BJ (cell line): ENCODE measurements at regions of chr10 and their contacts with region 1.

Region 1: GRCh38 chr10:88598055-88598454 is 11.5 kb downstream of the LIPJ start:
- DNase-seq: no peak
- H3K4me3 ChIP-seq: no peak overlapping the region
- H3K27me3 ChIP-seq: no peaks in the 10 kb centered on the region
- CTCF ChIP-seq: no peak

Region 2: GRCh38 chr10:88582806-88583583 is 15.1 kb before region 1 on chr10 and contains the start of gene RNLS:
- CTCF ChIA-PET with region 1: interaction called, 12 read pairs
- POLR2A ChIA-PET with region 1: interaction called, 3 read pairs
- DNase-seq: no peak
- H3K4me3 ChIP-seq: peak within 1 kb of the TSS; percentile 42
- H3K27me3 ChIP-seq: no peaks in the 10 kb centered on the region
- CTCF ChIP-seq: peak; percentile 94
- polyA plus RNA-seq, gene RNLS: 11.8 and 14.6 TPM in 2 replicates

Region 3: GRCh38 chr10:88616251-88616977 is 18.4 kb after region 1 on chr10:
- CTCF ChIA-PET with region 1: no interaction called
- POLR2A ChIA-PET with region 1: no interaction called
- DNase-seq: no peak
- H3K4me3 ChIP-seq: no peak overlapping the region
- H3K27me3 ChIP-seq: no peaks in the 10 kb centered on the region
- CTCF ChIP-seq: no peak

Region 4: DNA sequence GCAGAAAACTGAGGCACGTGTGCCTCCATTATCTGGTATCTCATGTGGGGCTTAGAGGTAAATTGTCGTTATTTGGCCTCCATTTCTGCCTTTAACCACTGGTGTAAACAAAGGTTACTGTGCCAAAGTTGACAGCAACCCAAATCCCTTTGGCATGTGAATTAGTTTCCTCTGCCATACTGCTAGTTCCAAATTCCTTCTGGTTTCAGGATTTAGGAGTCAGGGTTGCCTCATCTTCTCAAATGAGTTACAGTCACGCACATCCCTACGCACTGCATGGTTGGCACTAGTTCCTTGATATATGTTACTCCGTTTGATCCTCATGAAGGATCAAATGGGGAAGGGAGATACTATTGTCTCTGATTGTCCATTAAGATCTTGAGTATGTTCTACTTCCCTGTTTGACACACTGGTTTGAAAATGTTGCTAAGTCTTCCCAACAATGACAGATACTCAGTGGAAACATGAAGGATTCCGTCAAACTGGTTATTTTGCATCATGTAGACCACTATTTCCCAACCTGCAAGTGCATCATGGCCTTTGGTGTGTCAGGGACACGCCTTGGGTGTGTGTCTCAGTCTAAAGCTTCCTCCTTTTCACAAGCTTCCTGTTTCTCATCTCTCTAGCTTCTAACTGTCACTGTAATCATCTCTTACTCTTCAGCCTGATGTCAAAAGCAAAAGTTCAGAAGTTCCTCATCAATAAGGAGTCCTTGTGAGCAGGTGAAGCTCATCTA is 161.5 kb after region 1 on chr10 and contains the start of gene LIPN:
- CTCF ChIA-PET with region 1: no interaction called
- POLR2A ChIA-PET with region 1: no interaction called
- DNase-seq: no peak
- H3K4me3 ChIP-seq: no peak within 1 kb of the TSS
- H3K27me3 ChIP-seq: no peaks in the 10 kb centered on the region; the same call in 1 of the 2 replicates
- CTCF ChIP-seq: no peak
- polyA plus RNA-seq, gene LIPN: not detected in 2 replicates